CD8-positive, alpha-beta T cell (primary cell): ENCODE measurements at regions of chr4 and their contacts with region 1.

Region 1: GRCh38 chr4:24589448-24589847 is 5.1 kb upstream of the DHX15 start:
- DNase-seq: no peak
- ATAC-seq: no peak
- H3K4me3 ChIP-seq: no peak overlapping the region
- H3K4me3 Mint-ChIP-seq: no peak overlapping the region
- H3K27ac ChIP-seq: no peak overlapping the region
- H3K27ac Mint-ChIP-seq: no peak overlapping the region
- H3K4me1 ChIP-seq: no peaks in the 10 kb centered on the region
- H3K4me1 Mint-ChIP-seq: peaks cover 8% of the 10 kb centered on the region
- H3K27me3 ChIP-seq: no peaks in the 10 kb centered on the region
- H3K27me3 Mint-ChIP-seq: peaks cover 13% of the 10 kb centered on the region
- CTCF ChIP-seq: no peak

Region 2: DNA sequence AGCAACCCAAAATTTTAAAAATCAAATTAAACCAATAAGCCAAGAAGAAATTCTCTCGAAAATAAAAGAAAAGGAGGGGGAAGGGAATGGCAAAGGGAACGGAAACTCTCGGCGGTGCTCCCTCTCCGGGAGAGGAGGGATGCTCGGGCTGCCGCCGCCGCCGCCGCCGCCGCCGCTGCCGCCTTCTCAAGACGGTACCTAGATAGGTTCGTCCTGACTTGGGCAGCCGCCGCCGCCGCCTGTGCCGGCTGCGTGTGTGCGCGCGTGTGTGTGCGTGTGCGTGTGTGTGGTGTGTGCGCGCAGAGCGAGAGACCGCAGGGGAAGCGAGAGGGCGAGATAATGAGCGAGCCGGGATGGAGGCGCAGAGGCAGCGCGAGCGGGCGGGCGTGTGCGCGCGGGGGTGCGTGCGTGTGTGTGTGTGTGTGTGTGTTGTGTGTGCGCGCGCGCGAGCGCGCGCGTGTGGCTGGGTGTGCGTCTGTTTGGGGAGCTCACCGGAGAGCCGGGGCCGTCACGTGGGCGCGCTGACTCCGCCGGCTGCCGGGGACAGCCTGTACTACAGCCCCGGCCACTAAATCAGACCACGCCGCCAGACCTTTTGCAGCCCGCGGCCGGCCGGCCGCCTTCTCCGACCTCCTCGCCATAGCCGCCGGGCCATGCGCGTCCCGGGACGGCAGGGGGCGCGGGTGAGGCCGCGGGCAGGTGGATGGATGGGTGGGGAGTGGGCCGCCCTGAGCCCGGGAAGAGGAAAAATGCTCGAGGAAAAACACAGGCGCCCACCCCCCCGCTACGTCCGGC is 116.7 kb before region 1 on chr4:
- CTCF ChIA-PET with region 1: no interaction called
- POLR2A ChIA-PET with region 1: no interaction called
- intact Hi-C with region 1: loop called (anchors 2 to 5 kb)
- DNase-seq: peak; percentile 9 to 81 (median 46)
- ATAC-seq: peak; percentile 70
- H3K4me3 ChIP-seq: peak overlapping the region; percentile 43 to 47
- H3K4me3 Mint-ChIP-seq: peak overlapping the region; percentile 94
- H3K27ac ChIP-seq: no peak overlapping the region
- H3K27ac Mint-ChIP-seq: peak overlapping the region; percentile 81
- H3K4me1 ChIP-seq: peaks cover 14% of the 10 kb centered on the region
- H3K4me1 Mint-ChIP-seq: peaks cover 33% of the 10 kb centered on the region
- H3K27me3 ChIP-seq: peaks cover 2 to 13% of the 10 kb centered on the region in 2 experiments
- H3K27me3 Mint-ChIP-seq: peaks cover 64% of the 10 kb centered on the region
- CTCF ChIP-seq: peak; percentile 19